Breast epithelium (tissue), 4 donors: ENCODE measurements at regions of chr13 and their contacts with region 1.

Region 1: GRCh38 chr13:59690857-59691500 is 472.7 kb downstream of the DIAPH3 start:
- DNase-seq: no peak
- H3K4me3 ChIP-seq: no peak overlapping the region
- H3K27ac ChIP-seq: no peak overlapping the region
- H3K4me1 ChIP-seq: no peaks in the 10 kb centered on the region
- H3K27me3 ChIP-seq: no peaks in the 10 kb centered on the region
- CTCF ChIP-seq: no peak
- POLR2A ChIP-seq: no peak

Region 2: GRCh38 chr13:59823486-59823885 is 132.5 kb after region 1 on chr13:
- intact Hi-C with region 1: no loop called
- DNase-seq: no peak
- H3K4me3 ChIP-seq: no peak overlapping the region
- H3K27ac ChIP-seq: no peak overlapping the region
- H3K4me1 ChIP-seq: no peaks in the 10 kb centered on the region
- H3K27me3 ChIP-seq: no peaks in the 10 kb centered on the region
- CTCF ChIP-seq: no peak
- POLR2A ChIP-seq: no peak

Region 3: GRCh38 chr13:60441761-60442160 is 750.8 kb after region 1 on chr13:
- intact Hi-C with region 1: loop called (anchors 5 kb)
- DNase-seq: no peak
- H3K4me3 ChIP-seq: no peak overlapping the region
- H3K27ac ChIP-seq: no peak overlapping the region
- H3K4me1 ChIP-seq: no peaks in the 10 kb centered on the region
- H3K27me3 ChIP-seq: no peaks in the 10 kb centered on the region
- CTCF ChIP-seq: no peak
- POLR2A ChIP-seq: no peak